ENCODE measurements at regions of chr10 and their contacts with region 1.

Region 1: GRCh38 chr10:60208676-60209269 is 180.9 kb downstream of the ANK3 start:
- DNase-seq: peak; percentile 55
- H3K4me3 ChIP-seq: no peak overlapping the region
- H3K27ac ChIP-seq: no peak overlapping the region
- H3K4me1 ChIP-seq: peaks cover 8% of the 10 kb centered on the region
- H3K27me3 ChIP-seq: no peaks in the 10 kb centered on the region
- CTCF ChIP-seq: peak; percentile 53 to 56
- POLR2A ChIP-seq: no peak

Region 2: DNA sequence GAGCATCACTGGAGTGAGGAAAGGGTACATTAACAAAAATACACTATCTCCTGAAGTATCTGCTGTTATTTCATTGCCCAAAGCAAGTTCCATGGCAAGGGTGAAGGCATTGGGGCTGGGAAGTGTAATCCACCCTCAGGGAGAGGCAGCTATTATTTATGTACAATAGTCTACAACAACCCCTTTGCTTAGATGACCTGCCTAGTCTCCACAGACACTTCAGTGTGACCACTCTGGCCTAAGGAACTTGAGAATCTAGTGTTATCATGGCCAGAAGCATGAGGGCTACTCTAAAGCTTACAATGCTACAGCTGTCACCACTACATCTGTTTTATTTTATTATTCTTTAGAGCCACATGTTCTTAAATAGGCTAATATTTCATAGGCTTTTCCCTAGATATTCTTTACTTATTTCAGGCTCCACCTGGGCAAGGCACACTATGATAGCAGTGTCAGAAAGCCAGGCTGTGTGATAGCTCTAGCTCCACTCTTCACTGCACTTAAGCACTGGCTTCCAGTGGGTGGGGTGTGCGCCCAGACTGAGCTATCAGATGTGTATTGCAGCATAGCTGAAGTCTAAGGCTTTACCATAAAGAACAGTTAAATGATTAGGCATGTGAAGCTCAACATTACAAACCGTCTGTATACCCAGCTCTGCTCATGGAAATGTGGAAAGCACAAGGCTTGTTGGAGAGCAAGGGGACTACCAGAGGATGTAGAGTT is 185.5 kb before region 1 on chr10:
- CTCF ChIA-PET with region 1: no interaction called
- POLR2A ChIA-PET with region 1: no interaction called
- dilution Hi-C with region 1: no loop called
- intact Hi-C with region 1: no loop called
- DNase-seq: no peak
- H3K4me3 ChIP-seq: no peak overlapping the region
- H3K27ac ChIP-seq: no peak overlapping the region
- H3K4me1 ChIP-seq: no peaks in the 10 kb centered on the region
- H3K27me3 ChIP-seq: no peaks in the 10 kb centered on the region
- CTCF ChIP-seq: no peak
- POLR2A ChIP-seq: no peak

Region 3: DNA sequence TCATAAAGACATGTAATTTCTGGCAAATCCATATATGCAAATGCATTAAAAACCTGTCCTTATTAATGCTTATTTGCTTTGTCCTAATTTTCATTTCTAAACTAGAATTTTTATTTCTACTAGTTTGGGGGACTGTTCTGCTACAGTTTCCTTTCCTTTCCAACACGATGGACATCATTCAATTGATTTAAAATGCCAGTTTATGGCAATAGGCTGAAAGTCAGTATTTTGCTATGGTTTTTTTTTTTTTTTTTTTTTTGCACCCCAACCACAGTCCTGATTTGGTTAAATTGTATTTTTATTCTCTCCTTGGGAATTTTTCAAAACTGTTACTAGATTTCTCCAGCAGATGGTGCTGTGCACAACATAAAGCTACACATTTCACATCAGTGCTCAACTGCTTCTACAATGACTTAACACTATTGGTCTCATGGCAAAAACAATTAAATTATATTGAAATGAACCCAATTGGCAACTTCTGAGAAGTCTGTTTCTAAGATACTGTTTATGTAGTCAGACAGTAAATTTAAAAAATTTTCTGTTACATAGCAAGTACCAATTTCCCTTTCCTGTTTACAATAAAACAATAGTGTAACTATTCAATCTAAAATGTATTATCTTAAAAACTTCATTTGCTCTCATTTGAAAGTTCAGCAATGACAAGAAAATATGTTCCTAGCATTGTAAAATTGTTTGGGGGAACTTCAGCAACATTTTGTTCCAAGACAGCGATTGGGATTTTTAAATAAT is 108.6 kb before region 1 on chr10:
- CTCF ChIA-PET with region 1: interaction called, 128 read pairs
- POLR2A ChIA-PET with region 1: interaction called, 4 read pairs
- dilution Hi-C with region 1: no loop called
- intact Hi-C with region 1: loop called (anchors 1 kb)
- DNase-seq: peak; percentile 61
- H3K4me3 ChIP-seq: no peak overlapping the region
- H3K27ac ChIP-seq: no peak overlapping the region
- H3K4me1 ChIP-seq: no peaks in the 10 kb centered on the region
- H3K27me3 ChIP-seq: no peaks in the 10 kb centered on the region
- CTCF ChIP-seq: peak; percentile 20 to 40
- POLR2A ChIP-seq: no peak

Region 4: DNA sequence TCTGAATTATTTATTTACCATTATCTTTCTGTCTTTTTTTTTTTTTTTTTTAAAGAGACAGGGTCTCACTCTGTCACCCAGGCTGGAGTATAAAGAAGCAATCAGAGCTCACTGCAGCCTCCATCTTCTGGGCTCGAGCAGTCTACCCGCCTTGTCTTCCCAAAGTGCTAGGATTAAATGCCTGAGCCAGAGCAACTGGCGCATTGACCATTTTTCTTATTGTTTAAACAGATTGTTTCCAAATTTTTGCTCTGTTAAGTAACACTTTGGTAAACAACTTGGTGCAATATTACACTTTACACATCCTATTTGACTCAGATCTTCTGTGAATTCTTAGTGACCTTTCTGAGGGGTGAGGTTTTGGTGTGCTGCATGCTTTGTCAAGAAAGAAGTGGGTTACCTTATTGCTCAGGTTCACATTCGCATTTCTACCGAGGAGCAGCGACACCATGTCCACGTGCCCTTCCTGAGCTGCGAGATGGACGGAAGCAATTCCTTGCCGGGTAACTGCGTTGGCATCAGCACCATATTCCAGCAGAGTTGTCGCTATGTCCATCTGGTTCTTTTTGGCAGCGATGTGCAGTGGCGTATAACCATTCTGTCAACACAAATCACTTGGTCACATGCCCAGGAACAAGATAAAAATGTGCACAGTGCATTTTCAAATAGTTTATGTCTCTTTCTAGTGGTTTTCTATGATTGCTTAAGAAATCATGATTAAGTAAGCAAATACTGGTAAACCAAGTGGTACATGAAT is 22.3 kb before region 1 on chr10:
- CTCF ChIA-PET with region 1: interaction called, 7 read pairs
- POLR2A ChIA-PET with region 1: interaction called, 11 read pairs
- dilution Hi-C with region 1: no loop called
- intact Hi-C with region 1: no loop called
- DNase-seq: no peak
- H3K4me3 ChIP-seq: no peak overlapping the region
- H3K27ac ChIP-seq: no peak overlapping the region
- H3K4me1 ChIP-seq: peaks cover 9% of the 10 kb centered on the region
- H3K27me3 ChIP-seq: no peaks in the 10 kb centered on the region
- CTCF ChIP-seq: no peak
- POLR2A ChIP-seq: no peak

Region 5: DNA sequence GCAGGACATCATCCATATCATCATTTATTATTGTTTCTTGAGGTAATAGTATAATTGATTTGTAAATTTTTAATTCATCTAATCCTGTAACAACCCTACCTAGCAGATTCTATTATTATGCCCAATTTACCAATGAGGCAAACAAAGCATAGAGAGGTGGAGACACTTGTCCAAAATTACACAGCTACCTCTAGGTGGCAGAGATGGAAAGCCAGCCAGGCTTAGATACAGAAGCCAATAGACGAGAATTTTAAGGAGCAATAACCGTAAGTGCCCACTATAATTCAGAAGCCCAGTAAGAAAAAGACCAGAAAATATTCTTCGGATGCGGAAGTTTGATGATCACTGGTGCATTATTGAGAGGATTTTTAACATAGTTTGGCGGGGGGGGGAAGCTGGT is 126.9 kb after region 1 on chr10:
- CTCF ChIA-PET with region 1: interaction called, 12 read pairs
- POLR2A ChIA-PET with region 1: no interaction called
- dilution Hi-C with region 1: no loop called
- intact Hi-C with region 1: loop called (anchors 5 kb)
- DNase-seq: peak; percentile 27
- H3K4me3 ChIP-seq: no peak overlapping the region
- H3K27ac ChIP-seq: no peak overlapping the region
- H3K4me1 ChIP-seq: no peaks in the 10 kb centered on the region
- H3K27me3 ChIP-seq: no peaks in the 10 kb centered on the region
- CTCF ChIP-seq: peak in 1 of 2 donors; percentile 12
- POLR2A ChIP-seq: no peak

Region 6: DNA sequence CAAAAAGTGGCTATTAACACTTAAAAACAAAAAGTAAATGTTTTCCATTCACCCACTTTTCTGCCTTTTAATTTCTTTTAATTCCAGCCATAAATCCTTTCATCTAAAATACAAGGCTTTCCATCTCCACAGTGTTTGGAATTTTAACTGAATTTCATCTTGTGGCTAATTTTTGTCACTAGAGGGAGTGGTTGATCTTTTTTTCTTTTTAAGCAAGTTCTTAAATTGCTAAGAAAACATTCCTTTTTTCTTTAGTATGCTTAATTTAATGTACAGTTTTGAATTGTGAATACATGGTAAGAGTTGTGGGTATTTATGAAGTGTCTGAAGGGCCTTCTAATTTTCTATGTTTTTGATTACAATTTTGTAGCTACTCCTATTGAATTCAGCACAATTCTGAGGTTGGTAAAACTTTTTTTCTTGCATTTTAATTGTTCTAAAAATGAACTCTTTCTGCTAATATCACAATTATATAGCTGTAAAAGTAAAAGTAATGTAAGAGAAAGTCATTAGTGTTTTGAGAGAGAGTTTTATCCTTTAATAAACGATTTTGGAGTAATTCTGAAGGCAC is 235.8 kb after region 1 on chr10:
- CTCF ChIA-PET with region 1: interaction called, 52 read pairs
- POLR2A ChIA-PET with region 1: no interaction called
- dilution Hi-C with region 1: no loop called
- intact Hi-C with region 1: no loop called
- DNase-seq: peak; percentile 45
- H3K4me3 ChIP-seq: no peak overlapping the region
- H3K27ac ChIP-seq: no peak overlapping the region
- H3K4me1 ChIP-seq: peaks cover 7% of the 10 kb centered on the region
- H3K27me3 ChIP-seq: no peaks in the 10 kb centered on the region
- CTCF ChIP-seq: peak; percentile 14 to 18
- POLR2A ChIP-seq: no peak

Measured in endothelial cell of umbilical vein (primary cell).